Activated CD8-positive, alpha-beta memory T cell treated with anti-CD3 and anti-CD28 coated beads, Interleukin-2, amount 10 ng/mL, durations not matched to agents 7 days and 5 days (primary cell): ENCODE measurements at regions of chr11 and their contacts with region 1.

Region 1: GRCh38 chr11:33716236-33716635 is 15.6 kb upstream of the C11orf91 start:
- DNase-seq: no peak
- ATAC-seq: no peak
- H3K4me3 Mint-ChIP-seq: no peak overlapping the region
- H3K27ac Mint-ChIP-seq: no peak overlapping the region
- H3K4me1 Mint-ChIP-seq: peaks cover 11% of the 10 kb centered on the region
- H3K27me3 Mint-ChIP-seq: no peaks in the 10 kb centered on the region

Region 2: GRCh38 chr11:33687733-33688479 is 28.3 kb before region 1 on chr11:
- CTCF ChIA-PET with region 1: no interaction called
- DNase-seq: no peak
- ATAC-seq: no peak
- H3K4me3 Mint-ChIP-seq: no peak overlapping the region
- H3K27ac Mint-ChIP-seq: no peak overlapping the region
- H3K4me1 Mint-ChIP-seq: peaks cover 3% of the 10 kb centered on the region
- H3K27me3 Mint-ChIP-seq: peaks cover 18% of the 10 kb centered on the region

Region 3: DNA sequence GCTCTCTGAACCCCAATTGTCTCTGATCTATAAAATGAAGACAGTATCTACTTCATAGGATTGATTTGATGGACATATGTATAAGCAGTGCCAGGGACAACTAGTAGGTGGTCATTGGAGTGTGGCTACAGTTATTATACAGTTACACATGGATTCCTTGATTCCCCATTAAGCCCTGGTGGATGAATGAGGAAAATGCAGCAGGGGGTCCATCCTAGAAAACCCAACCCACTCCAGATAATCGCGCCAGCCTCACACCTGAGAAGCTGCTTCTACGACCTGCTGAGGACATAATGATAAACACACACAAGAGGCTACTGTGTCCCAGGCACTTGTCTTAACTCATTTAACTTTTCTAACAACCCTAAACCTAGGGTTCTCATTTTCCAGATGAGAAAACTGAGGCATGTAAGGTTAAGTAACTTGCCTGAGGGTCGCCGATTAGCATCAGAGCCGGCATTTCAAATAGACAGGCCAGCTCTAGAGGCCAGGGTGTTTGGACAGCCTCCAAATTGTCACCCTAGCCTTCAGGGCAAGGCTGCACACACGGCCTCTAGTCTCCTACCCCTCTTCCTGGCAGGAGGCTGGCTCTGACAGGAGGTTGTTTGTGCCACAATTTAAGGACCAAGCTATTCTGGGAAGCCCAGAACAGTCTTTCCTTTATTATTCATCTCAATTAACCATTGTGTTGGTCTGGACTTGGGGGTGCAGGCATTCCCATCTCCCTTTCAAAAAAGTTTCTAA is 11.8 kb before region 1 on chr11:
- CTCF ChIA-PET with region 1: interaction called, 14 read pairs
- DNase-seq: no peak
- ATAC-seq: no peak
- H3K4me3 Mint-ChIP-seq: no peak overlapping the region
- H3K27ac Mint-ChIP-seq: no peak overlapping the region
- H3K4me1 Mint-ChIP-seq: peaks cover 24% of the 10 kb centered on the region
- H3K27me3 Mint-ChIP-seq: peaks cover 7% of the 10 kb centered on the region

Region 4: GRCh38 chr11:33742249-33742851 is 26.1 kb after region 1 on chr11:
- CTCF ChIA-PET with region 1: interaction called, 25 read pairs
- DNase-seq: no peak
- ATAC-seq: no peak
- H3K4me3 Mint-ChIP-seq: no peak overlapping the region
- H3K27ac Mint-ChIP-seq: no peak overlapping the region
- H3K4me1 Mint-ChIP-seq: no peaks in the 10 kb centered on the region
- H3K27me3 Mint-ChIP-seq: peaks cover 8% of the 10 kb centered on the region

Region 5: GRCh38 chr11:33893711-33894397 is 177.6 kb after region 1 on chr11:
- CTCF ChIA-PET with region 1: no interaction called
- DNase-seq: peak; percentile 75
- ATAC-seq: peak; percentile 88
- H3K4me3 Mint-ChIP-seq: peak overlapping the region; percentile 33
- H3K27ac Mint-ChIP-seq: peak overlapping the region; percentile 5
- H3K4me1 Mint-ChIP-seq: peaks cover 21% of the 10 kb centered on the region
- H3K27me3 Mint-ChIP-seq: peaks cover 83% of the 10 kb centered on the region